Left colon (tissue), 2 donors: ENCODE measurements at regions of chr14 and their contacts with region 1.

Region 1: DNA sequence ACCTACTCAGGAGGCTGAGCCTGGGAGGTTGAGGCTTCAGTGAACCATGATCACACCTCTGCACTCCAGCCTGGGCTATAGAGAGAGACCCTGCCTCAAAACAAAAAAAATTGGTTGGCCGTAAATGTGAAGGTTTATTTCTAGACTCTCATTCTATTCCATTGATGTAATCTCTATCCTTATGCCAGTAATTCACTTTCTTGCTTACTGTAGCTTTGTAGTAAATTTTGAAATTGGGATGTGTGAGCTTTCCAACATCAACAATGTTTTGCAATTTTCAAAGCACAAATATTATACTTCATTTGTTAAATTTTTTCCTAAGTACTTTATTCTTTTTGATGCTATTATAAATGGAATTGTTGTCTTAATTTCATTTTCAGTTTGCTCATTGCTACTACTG is 24.6 kb downstream of the LIN52 start:
- DNase-seq: no peak
- ATAC-seq: no peak

Region 2: GRCh38 chr14:74249433-74250375 is 140.3 kb after region 1 on chr14:
- intact Hi-C with region 1: loop called (anchors 5 to 10 kb)
- DNase-seq: no peak
- ATAC-seq: no peak

Region 3: GRCh38 chr14:74257078-74257989 is 148.0 kb after region 1 on chr14:
- intact Hi-C with region 1: loop called (anchors 5 to 10 kb)
- DNase-seq: peak in 1 of 2 donors; percentile 59
- ATAC-seq: peak; percentile 91